ENCODE measurements at regions of chr16 and their contacts with region 1.

Region 1: DNA sequence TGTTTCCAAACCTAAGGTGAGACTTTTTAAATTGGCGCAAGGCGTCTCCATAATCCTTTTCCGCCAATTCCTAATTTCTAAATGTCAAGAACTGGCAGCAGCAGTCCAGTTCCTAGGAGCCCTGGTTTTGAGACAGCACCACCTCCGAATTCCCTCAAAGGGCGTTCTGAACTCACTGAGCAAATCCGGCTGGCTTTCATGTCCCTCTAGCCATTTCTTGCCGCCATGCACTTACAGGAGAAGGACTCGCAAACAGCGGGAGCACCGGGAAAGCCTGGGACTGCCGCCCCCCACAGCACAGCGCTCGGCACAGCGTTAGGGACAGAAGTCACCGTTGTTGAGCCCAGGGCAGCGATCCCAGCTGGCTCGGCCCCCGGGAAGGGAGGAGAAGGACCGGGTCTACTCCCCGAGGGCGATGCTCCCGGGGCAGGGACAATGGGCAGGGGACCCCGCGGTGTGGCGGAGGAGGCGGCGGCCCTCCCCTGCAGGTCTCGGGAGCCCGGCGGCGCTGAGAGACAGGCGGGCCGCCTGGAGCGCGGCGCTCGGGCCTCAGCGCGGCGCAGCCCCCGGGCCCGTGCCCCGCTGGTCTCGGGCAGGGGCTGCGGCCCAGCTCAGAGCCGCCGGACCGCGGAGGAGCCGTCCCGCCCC is 545 bp downstream of the ARHGAP17 start:
- DNase-seq: peak; percentile 24
- H3K4me3 Mint-ChIP-seq: peak overlapping the region; percentile 96
- H3K27ac Mint-ChIP-seq: peak overlapping the region; percentile 90
- H3K4me1 Mint-ChIP-seq: peaks cover 72% of the 10 kb centered on the region
- H3K27me3 Mint-ChIP-seq: no peaks in the 10 kb centered on the region

Region 2: GRCh38 chr16:24975428-24975889 is 39.2 kb before region 1 on chr16:
- CTCF ChIA-PET with region 1: no interaction called
- POLR2A ChIA-PET with region 1: no interaction called
- DNase-seq: no peak
- H3K4me3 Mint-ChIP-seq: no peak overlapping the region
- H3K27ac Mint-ChIP-seq: no peak overlapping the region
- H3K4me1 Mint-ChIP-seq: peaks cover 36% of the 10 kb centered on the region
- H3K27me3 Mint-ChIP-seq: no peaks in the 10 kb centered on the region

Region 3: DNA sequence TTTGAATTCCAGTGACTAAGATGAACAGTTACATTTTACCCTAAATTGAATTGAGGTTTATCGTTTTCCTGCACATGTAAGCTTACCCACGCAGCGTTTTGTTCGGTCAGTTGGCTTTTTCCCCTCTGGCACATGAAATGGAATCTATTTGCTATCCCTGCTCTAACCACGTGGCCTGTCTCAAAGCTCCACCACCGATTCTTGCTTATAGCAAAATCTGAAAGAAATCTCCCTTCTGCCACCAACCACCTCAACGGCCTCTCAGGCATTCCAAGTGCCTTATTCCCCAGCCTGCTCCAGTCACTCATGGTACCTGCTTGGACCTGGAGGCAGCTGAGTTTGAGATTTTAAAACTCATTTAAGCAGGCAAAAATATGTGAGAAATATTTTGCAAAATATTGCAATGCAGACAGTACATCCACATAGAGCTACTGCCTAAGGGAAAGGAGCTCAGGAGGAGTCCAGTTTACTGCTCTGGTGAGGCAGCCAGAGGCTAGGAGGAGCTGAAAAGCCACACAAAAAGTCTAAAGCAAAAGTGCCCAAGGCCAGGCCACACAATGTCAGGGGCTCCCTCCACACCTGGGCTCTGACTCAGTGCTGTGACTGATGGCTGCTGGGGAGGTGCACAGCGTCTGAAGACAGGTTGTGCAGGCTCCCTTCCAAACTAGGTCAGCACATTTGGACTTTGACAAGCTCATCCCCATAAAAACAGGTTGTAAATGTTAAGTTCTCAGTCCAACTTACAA is 25.9 kb before region 1 on chr16:
- CTCF ChIA-PET with region 1: no interaction called
- POLR2A ChIA-PET with region 1: no interaction called
- DNase-seq: no peak
- H3K4me3 Mint-ChIP-seq: no peak overlapping the region
- H3K27ac Mint-ChIP-seq: no peak overlapping the region
- H3K4me1 Mint-ChIP-seq: peaks cover 32% of the 10 kb centered on the region
- H3K27me3 Mint-ChIP-seq: no peaks in the 10 kb centered on the region

Region 4: GRCh38 chr16:25031441-25032307 is 17.1 kb after region 1 on chr16:
- CTCF ChIA-PET with region 1: interaction called, 14 read pairs
- POLR2A ChIA-PET with region 1: interaction called, 41 read pairs
- DNase-seq: peak; percentile 93
- H3K4me3 Mint-ChIP-seq: peak overlapping the region; percentile 84
- H3K27ac Mint-ChIP-seq: peak overlapping the region; percentile 90
- H3K4me1 Mint-ChIP-seq: peaks cover 30% of the 10 kb centered on the region
- H3K27me3 Mint-ChIP-seq: no peaks in the 10 kb centered on the region

Region 5: DNA sequence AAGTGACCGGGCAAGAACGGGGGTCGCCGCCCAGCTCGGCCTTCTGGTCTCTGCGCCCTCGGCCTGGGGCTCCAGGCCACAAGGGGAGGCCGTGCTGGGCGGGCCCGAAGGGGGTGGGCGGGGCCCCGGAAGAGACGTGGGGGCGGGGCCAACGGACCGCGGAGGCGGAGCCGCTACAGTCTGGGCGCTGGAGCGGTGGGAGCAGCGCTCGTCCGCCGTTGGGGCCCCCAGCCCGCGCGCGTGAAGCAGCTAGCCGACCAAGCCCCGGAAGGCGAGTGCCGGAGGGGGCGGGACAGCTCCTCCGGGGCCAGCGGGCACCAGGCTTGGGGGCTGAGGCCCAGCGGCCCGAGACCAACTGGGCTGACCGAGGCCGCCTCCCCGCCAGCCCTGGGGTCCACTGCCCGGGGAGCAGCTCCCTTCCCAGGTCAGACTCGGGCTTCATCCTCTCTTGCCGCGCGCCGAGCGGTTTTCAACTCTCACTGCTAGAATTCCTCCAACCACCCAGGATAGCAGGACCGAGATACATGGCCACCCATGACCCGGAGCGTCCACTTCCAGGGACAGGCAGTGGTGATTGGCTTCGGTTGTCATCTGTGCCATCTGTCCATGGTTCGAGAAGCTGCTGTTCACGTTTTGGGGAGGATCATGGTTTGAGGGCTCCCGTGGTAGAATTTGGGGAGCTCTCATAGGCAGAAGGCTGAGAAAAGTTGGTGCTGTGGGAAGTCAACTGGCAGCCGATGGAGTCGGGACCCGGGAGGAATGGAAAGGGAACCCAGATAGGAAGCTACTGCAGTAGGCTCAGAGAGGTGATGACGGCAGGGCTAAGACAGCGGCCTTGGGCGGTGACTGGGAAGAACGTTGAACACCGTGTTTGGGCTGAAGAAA is 52.4 kb after region 1 on chr16:
- CTCF ChIA-PET with region 1: interaction called, 3 read pairs
- POLR2A ChIA-PET with region 1: interaction called, 11 read pairs
- DNase-seq: peak; percentile 89
- H3K4me3 Mint-ChIP-seq: peak overlapping the region; percentile 87
- H3K27ac Mint-ChIP-seq: peak overlapping the region; percentile 78
- H3K4me1 Mint-ChIP-seq: peaks cover 41% of the 10 kb centered on the region
- H3K27me3 Mint-ChIP-seq: peaks cover 8% of the 10 kb centered on the region

Region 6: GRCh38 chr16:25078386-25078978 is 63.9 kb after region 1 on chr16:
- CTCF ChIA-PET with region 1: no interaction called
- POLR2A ChIA-PET with region 1: no interaction called
- DNase-seq: no peak
- H3K4me3 Mint-ChIP-seq: no peak overlapping the region
- H3K27ac Mint-ChIP-seq: no peak overlapping the region
- H3K4me1 Mint-ChIP-seq: no peaks in the 10 kb centered on the region
- H3K27me3 Mint-ChIP-seq: no peaks in the 10 kb centered on the region

Region 7: GRCh38 chr16:25299792-25300590 is 285.4 kb after region 1 on chr16:
- CTCF ChIA-PET with region 1: no interaction called
- POLR2A ChIA-PET with region 1: no interaction called
- DNase-seq: no peak
- H3K4me3 Mint-ChIP-seq: no peak overlapping the region
- H3K27ac Mint-ChIP-seq: no peak overlapping the region
- H3K4me1 Mint-ChIP-seq: peaks cover 4% of the 10 kb centered on the region
- H3K27me3 Mint-ChIP-seq: peaks cover 2% of the 10 kb centered on the region

Measured in activated CD4-positive, alpha-beta memory T cell treated with anti-CD3 and anti-CD28 coated beads, Interleukin-2, amount 10 ng/mL, durations not matched to agents 7 days and 5 days (primary cell).